T-cell (primary cell): ENCODE measurements at regions of chrX and their contacts with region 1.

Region 1: DNA sequence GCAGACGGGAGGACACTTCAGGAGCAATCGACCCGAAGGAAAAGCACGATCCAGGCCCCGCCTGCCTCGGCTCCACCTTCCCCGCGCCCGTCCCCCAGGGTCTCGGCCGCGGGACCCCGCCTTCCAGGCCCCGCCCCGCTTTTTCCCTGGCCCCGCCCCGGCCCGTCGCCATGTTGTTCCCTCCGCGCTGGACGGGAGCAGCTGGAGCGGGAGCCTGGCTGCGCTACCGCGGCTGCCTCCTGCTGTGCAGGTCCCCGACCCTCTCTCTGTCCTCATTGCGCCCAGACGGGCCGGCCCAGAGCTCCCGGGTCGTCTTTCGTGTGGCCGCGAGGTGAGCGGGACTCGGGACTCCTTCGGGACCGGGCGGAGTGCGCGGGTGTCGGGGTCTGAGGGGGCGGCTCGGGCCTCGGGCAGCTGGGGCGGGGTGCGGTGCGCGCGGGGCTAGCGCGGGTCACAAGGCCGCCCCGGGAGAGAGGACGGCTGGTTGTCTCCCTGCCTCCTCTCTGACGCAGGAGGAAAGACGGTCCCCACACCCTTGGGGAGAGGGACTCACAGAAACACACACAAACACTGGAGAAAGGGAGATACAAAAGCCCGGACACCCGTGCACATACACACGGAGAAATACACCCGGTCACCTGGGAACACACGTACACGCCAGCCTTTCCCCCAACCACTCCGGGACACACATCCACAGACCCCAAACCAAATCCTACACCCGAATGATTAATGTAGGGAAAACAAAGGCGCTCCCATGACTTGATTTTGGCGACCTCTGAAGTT is at the start of gene RAB9A:
- DNase-seq: peak; percentile 51 to 84 (median 70)
- ATAC-seq: peak; percentile 93 to 97 (median 94)
- H3K4me3 ChIP-seq: peak within 1 kb of the TSS; percentile 68 to 81
- H3K4me3 Mint-ChIP-seq: peak within 1 kb of the TSS; percentile 84 to 93 (median 84)
- H3K27ac ChIP-seq: peak within 1 kb of the TSS; percentile 73
- H3K27ac Mint-ChIP-seq: peak within 1 kb of the TSS; percentile 84 to 89
- H3K4me1 ChIP-seq: peaks cover 8 to 21% of the 10 kb centered on the region in 2 experiments
- H3K4me1 Mint-ChIP-seq: peaks cover 44 to 67% (median 61%) of the 10 kb centered on the region in 3 donors
- H3K27me3 ChIP-seq: no peaks in the 10 kb centered on the region
- H3K27me3 Mint-ChIP-seq: peaks cover 0 to 24% of the 10 kb centered on the region in 2 donors
- total RNA-seq, gene RAB9A: 12.2 to 27.3 (median 16.4) TPM

Region 2: DNA sequence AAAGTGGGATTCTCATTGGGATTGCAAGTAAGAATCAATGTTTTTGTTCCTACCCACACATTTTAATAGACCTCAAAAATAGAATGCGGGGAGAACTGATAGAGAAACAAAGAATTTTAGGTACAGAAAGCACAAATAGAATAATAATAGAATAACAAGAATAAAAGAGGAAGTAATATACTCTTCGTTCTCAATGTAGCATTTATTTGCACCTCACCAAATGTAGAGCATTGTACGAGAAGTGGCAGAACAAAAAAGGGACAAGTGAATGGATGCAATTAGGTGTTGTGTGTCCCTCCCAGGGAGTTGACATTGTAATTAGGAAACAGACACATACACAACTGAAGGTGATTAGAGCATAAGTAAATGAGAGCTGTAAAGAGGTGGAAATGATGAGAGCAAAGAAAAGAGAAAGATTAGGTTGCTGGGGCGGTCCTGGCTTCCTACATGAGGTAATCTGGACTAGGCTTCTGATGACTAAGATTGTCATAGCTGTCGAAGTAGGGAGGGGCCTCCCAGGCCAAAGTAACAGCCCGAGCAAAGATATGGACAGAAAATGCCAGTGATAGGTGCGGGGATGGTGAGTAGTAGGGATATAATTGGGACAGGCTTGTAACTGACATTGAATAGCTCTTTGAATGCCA is 10.2 kb after region 1 on chrX:
- CTCF ChIA-PET with region 1: interaction called, 3 to 17 read pairs
- POLR2A ChIA-PET with region 1: interaction called in 1 of 2 experiments, 3 read pairs
- DNase-seq: peak in 1 of 35 experiments; percentile 3
- ATAC-seq: no peak
- H3K4me3 ChIP-seq: no peak overlapping the region
- H3K4me3 Mint-ChIP-seq: no peak overlapping the region
- H3K27ac ChIP-seq: no peak overlapping the region
- H3K27ac Mint-ChIP-seq: no peak overlapping the region
- H3K4me1 ChIP-seq: peaks cover 0 to 32% of the 10 kb centered on the region in 2 experiments
- H3K4me1 Mint-ChIP-seq: peaks cover 36 to 88% (median 67%) of the 10 kb centered on the region in 3 donors
- H3K27me3 ChIP-seq: no peaks in the 10 kb centered on the region
- H3K27me3 Mint-ChIP-seq: peaks cover 0 to 8% of the 10 kb centered on the region in 2 donors

Region 3: GRCh38 chrX:13717700-13718472 is 28.7 kb after region 1 on chrX:
- CTCF ChIA-PET with region 1: interaction called, 3 to 4 read pairs
- POLR2A ChIA-PET with region 1: interaction called, 3 to 10 read pairs
- DNase-seq: no peak
- ATAC-seq: no peak
- H3K4me3 ChIP-seq: no peak overlapping the region
- H3K4me3 Mint-ChIP-seq: no peak overlapping the region
- H3K27ac ChIP-seq: peak overlapping the region; percentile 36
- H3K27ac Mint-ChIP-seq: peak overlapping the region; percentile 59 to 80
- H3K4me1 ChIP-seq: peaks cover 5 to 38% of the 10 kb centered on the region in 2 experiments
- H3K4me1 Mint-ChIP-seq: peaks cover 34 to 49% (median 47%) of the 10 kb centered on the region in 3 donors
- H3K27me3 ChIP-seq: no peaks in the 10 kb centered on the region
- H3K27me3 Mint-ChIP-seq: no peaks in the 10 kb centered on the region

Region 4: GRCh38 chrX:13955095-13955647 is 266.0 kb after region 1 on chrX:
- CTCF ChIA-PET with region 1: no interaction called
- POLR2A ChIA-PET with region 1: no interaction called
- DNase-seq: no peak
- ATAC-seq: no peak
- H3K4me3 ChIP-seq: no peak overlapping the region
- H3K4me3 Mint-ChIP-seq: no peak overlapping the region
- H3K27ac ChIP-seq: no peak overlapping the region
- H3K27ac Mint-ChIP-seq: no peak overlapping the region
- H3K4me1 ChIP-seq: no peaks in the 10 kb centered on the region
- H3K4me1 Mint-ChIP-seq: peaks cover 0 to 5% (median 5%) of the 10 kb centered on the region in 3 donors
- H3K27me3 ChIP-seq: peaks cover 0 to 2% of the 10 kb centered on the region in 2 experiments
- H3K27me3 Mint-ChIP-seq: peaks cover 0 to 49% of the 10 kb centered on the region in 2 donors